Activated T-helper 2 cell treated with anti-CD3 and anti-CD28 coated beads, Interferon-gamma antibody, Interleukin-2, Interleukin-4, amounts not matched to agents 10 μg/mL and 5 μg/mL and 100 μg/mL, durations not matched to agents 14 hours and 24 hours and 36 hours (primary cell): ENCODE measurements at regions of chr12 and their contacts with region 1.

Region 1: GRCh38 chr12:112012775-112013600 is at the starts of genes ERP29 and TMEM116:
- DNase-seq: peak; percentile 98
- H3K4me3 Mint-ChIP-seq: peak within 1 kb of the TSS; percentile 94
- H3K27ac Mint-ChIP-seq: peak within 1 kb of the TSS; percentile 94
- H3K4me1 Mint-ChIP-seq: peaks cover 40% of the 10 kb centered on the region
- H3K27me3 Mint-ChIP-seq: no peaks in the 10 kb centered on the region
- total RNA-seq, gene ERP29: 58.9 and 59.9 TPM in 2 replicates
- total RNA-seq, gene TMEM116: 7.2 and 9.0 TPM in 2 replicates

Region 2: DNA sequence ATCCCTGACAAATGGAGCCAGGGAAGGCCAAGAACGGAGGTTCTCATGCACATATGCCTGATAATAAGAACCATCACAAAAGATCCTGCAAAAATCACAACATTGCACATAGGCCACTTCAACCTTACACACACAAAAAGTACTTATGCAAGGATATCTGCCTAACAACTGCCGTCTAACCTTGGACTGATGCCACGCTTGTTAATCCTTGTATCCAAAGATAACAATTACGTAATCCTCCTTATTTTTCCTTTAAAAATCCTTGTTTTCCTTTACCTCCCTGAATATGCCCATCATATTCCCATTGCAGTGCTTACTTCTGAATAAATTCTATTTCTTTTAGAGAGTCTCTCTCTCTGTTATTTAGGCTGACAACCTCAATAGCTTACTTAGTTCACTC is 59.5 kb before region 1 on chr12:
- intact Hi-C with region 1: loop called (anchors 2 kb)
- DNase-seq: no peak
- H3K4me3 Mint-ChIP-seq: no peak overlapping the region
- H3K27ac Mint-ChIP-seq: no peak overlapping the region
- H3K4me1 Mint-ChIP-seq: peaks cover 19% of the 10 kb centered on the region
- H3K27me3 Mint-ChIP-seq: no peaks in the 10 kb centered on the region

Region 3: DNA sequence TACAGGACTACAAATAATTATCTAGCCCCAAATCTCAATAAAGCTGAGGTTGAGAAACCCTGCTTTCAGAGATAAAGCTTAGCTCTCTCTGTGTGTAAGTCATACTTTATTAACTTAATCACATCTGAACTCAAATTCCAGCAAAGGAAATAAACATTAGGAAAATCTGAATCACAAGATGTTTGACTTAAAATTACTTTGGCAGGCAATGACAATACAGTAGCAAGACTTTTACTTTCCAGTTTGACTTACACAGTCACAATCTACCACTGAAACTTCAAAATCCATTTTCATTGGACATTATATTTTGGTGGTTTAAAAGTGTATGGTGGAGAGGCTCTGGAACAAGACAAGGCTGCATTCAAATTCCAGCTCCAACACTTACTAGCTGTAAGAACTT is 11.4 kb before region 1 on chr12:
- intact Hi-C with region 1: loop called (anchors 1 kb)
- DNase-seq: no peak
- H3K4me3 Mint-ChIP-seq: no peak overlapping the region
- H3K27ac Mint-ChIP-seq: no peak overlapping the region
- H3K4me1 Mint-ChIP-seq: peaks cover 53% of the 10 kb centered on the region
- H3K27me3 Mint-ChIP-seq: no peaks in the 10 kb centered on the region

Region 4: GRCh38 chr12:112130441-112130998 is 117.5 kb after region 1 on chr12:
- intact Hi-C with region 1: loop called (anchors 2 kb)
- DNase-seq: no peak
- H3K4me3 Mint-ChIP-seq: peak overlapping the region; percentile 72
- H3K27ac Mint-ChIP-seq: peak overlapping the region; percentile 72
- H3K4me1 Mint-ChIP-seq: peaks cover 45% of the 10 kb centered on the region
- H3K27me3 Mint-ChIP-seq: no peaks in the 10 kb centered on the region

Region 5: GRCh38 chr12:112409064-112409905 is 396.3 kb after region 1 on chr12 and contains the start of gene RPL6:
- intact Hi-C with region 1: loop called (anchors 5 kb)
- DNase-seq: peak; percentile 77
- H3K4me3 Mint-ChIP-seq: peak within 1 kb of the TSS; percentile 99
- H3K27ac Mint-ChIP-seq: peak within 1 kb of the TSS; percentile 100
- H3K4me1 Mint-ChIP-seq: peaks cover 27% of the 10 kb centered on the region
- H3K27me3 Mint-ChIP-seq: no peaks in the 10 kb centered on the region
- total RNA-seq, gene RPL6: 1,640 and 1,680 TPM in 2 replicates